Activated naive CD4-positive, alpha-beta T cell treated with anti-CD3 and anti-CD28 coated beads for 36 hours (primary cell): ENCODE measurements at regions of chr1 and their contacts with region 1.

Region 1: GRCh38 chr1:12047120-12047876 is 15.8 kb upstream of the TNFRSF8 start:
- DNase-seq: peak; percentile 87
- H3K4me3 Mint-ChIP-seq: no peak overlapping the region
- H3K27ac Mint-ChIP-seq: no peak overlapping the region
- H3K4me1 Mint-ChIP-seq: peaks cover 8% of the 10 kb centered on the region
- H3K27me3 Mint-ChIP-seq: peaks cover 8% of the 10 kb centered on the region

Region 2: GRCh38 chr1:11967028-11967547 is 80.2 kb before region 1 on chr1:
- CTCF ChIA-PET with region 1: no interaction called
- intact Hi-C with region 1: no loop called
- DNase-seq: no peak
- H3K4me3 Mint-ChIP-seq: no peak overlapping the region
- H3K27ac Mint-ChIP-seq: no peak overlapping the region
- H3K4me1 Mint-ChIP-seq: no peaks in the 10 kb centered on the region
- H3K27me3 Mint-ChIP-seq: no peaks in the 10 kb centered on the region

Region 3: GRCh38 chr1:12019858-12020509 is 27.3 kb before region 1 on chr1:
- CTCF ChIA-PET with region 1: no interaction called
- intact Hi-C with region 1: loop called (anchors 1 kb)
- DNase-seq: no peak
- H3K4me3 Mint-ChIP-seq: peak overlapping the region; percentile 82
- H3K27ac Mint-ChIP-seq: peak overlapping the region; percentile 56
- H3K4me1 Mint-ChIP-seq: peaks cover 8% of the 10 kb centered on the region
- H3K27me3 Mint-ChIP-seq: no peaks in the 10 kb centered on the region

Region 4: DNA sequence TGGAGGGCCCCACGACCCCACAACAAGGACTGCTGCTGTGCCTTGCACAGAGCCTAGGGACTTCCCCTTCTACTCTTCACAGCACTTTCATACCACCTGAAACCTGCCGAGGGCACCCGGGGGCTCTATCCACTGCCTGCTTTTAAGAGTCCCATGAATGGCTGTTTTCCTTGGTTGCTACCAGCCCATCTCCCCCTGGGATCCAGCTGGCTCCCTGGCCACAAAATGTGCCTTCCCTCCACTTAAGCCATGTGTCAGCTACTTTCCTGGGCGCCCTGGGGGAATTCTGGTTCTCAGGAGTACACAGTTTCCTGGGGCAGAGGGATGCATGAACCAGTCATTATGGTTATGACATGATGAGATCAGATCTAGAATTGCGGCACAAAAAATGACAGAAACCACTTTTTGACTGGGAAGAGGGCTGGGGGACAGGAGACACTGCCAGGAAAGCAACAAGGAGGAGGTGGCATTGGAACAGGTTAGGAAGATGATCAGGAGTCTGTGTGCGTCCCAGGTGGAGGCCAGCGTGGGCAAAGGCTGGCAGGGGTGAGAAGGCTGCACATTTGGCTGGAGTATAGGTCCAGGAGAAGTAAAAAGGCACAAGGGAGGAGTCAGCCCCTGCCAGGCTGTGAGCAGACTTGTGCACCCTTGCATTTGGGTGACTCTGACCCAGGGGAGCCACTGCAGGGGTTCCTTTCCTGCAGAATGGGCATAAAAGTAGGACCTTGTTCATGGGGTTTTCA is 12.6 kb after region 1 on chr1:
- CTCF ChIA-PET with region 1: no interaction called
- intact Hi-C with region 1: loop called (anchors 1 kb)
- DNase-seq: peak; percentile 81
- H3K4me3 Mint-ChIP-seq: peak overlapping the region; percentile 2
- H3K27ac Mint-ChIP-seq: peak overlapping the region; percentile 38
- H3K4me1 Mint-ChIP-seq: peaks cover 60% of the 10 kb centered on the region
- H3K27me3 Mint-ChIP-seq: peaks cover 22% of the 10 kb centered on the region

Region 5: GRCh38 chr1:12067900-12068821 is 20.9 kb after region 1 on chr1:
- CTCF ChIA-PET with region 1: interaction called, 3 read pairs
- intact Hi-C with region 1: loop called (anchors 1 kb)
- DNase-seq: peak; percentile 89
- H3K4me3 Mint-ChIP-seq: peak overlapping the region; percentile 53
- H3K27ac Mint-ChIP-seq: peak overlapping the region; percentile 92
- H3K4me1 Mint-ChIP-seq: peaks cover 52% of the 10 kb centered on the region
- H3K27me3 Mint-ChIP-seq: peaks cover 31% of the 10 kb centered on the region

Region 6: GRCh38 chr1:12078938-12079861 is 31.9 kb after region 1 on chr1:
- CTCF ChIA-PET with region 1: interaction called, 12 read pairs
- intact Hi-C with region 1: no loop called
- DNase-seq: peak; percentile 78
- H3K4me3 Mint-ChIP-seq: no peak overlapping the region
- H3K27ac Mint-ChIP-seq: no peak overlapping the region
- H3K4me1 Mint-ChIP-seq: peaks cover 18% of the 10 kb centered on the region
- H3K27me3 Mint-ChIP-seq: peaks cover 2% of the 10 kb centered on the region

Region 7: GRCh38 chr1:12087797-12088314 is 40.6 kb after region 1 on chr1:
- CTCF ChIA-PET with region 1: no interaction called
- intact Hi-C with region 1: loop called (anchors 2 kb)
- DNase-seq: peak; percentile 77
- H3K4me3 Mint-ChIP-seq: no peak overlapping the region
- H3K27ac Mint-ChIP-seq: peak overlapping the region; percentile 76
- H3K4me1 Mint-ChIP-seq: peaks cover 34% of the 10 kb centered on the region
- H3K27me3 Mint-ChIP-seq: no peaks in the 10 kb centered on the region

Region 8: GRCh38 chr1:12161662-12162458 is 114.6 kb after region 1 on chr1:
- CTCF ChIA-PET with region 1: no interaction called
- intact Hi-C with region 1: loop called (anchors 5 kb)
- DNase-seq: peak; percentile 92
- H3K4me3 Mint-ChIP-seq: no peak overlapping the region
- H3K27ac Mint-ChIP-seq: peak overlapping the region; percentile 83
- H3K4me1 Mint-ChIP-seq: peaks cover 70% of the 10 kb centered on the region
- H3K27me3 Mint-ChIP-seq: no peaks in the 10 kb centered on the region

Region 9: DNA sequence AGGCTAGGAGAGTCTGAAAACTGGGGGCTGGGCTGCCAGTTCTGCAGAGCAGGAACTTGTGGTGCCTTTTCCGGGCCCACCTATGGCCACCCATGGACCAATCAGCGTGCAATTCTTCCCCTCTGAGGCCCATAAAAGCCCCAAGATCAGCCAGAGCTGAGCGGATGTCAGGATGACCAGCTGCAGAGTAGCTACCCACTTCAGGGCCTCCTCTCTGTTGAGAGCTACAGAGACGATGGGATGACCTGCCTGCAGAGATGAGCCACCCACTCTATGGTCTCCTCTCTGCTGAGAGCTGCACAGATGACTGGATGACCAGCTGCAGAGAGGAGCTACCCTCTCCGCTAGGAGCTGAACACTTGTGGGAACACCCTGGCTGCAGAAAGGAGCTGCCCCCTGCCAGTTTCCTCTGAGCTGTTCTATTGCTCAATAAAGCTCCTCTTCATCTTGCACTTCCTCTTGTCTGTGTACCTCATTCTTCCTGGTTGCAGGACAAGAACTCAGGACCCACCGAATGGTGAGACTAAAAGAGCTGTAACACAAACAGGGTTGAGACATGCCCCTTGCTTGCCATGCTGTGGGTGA is 583.7 kb after region 1 on chr1:
- CTCF ChIA-PET with region 1: no interaction called
- intact Hi-C with region 1: no loop called
- DNase-seq: no peak
- H3K4me3 Mint-ChIP-seq: no peak overlapping the region
- H3K27ac Mint-ChIP-seq: no peak overlapping the region
- H3K4me1 Mint-ChIP-seq: peaks cover 10% of the 10 kb centered on the region
- H3K27me3 Mint-ChIP-seq: no peaks in the 10 kb centered on the region